Aorta (tissue), 5 donors: ENCODE measurements at regions of chr15 and their contacts with region 1.

Region 1: DNA sequence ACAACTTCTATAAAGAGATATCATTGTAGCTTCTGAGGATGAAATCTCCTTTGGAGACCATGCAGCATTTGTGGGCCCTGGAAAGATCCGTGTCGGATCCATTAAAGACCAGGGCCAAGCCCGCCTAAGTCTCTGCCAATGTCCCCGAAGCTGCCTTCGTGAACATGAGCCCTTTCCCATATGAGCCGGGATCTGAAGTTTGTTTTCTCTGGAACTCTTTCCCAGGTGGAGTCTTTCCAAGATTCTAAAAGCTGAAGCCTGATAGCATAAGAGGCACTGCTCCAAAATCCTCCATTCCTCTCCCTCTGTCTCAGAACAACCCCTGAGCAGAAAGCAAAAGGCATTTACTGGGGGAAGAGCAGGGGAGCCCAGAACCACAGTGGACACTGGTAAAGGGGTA is 274.6 kb downstream of the NTRK3 start:
- DNase-seq: peak in 1 of 2 donors; percentile 55
- ATAC-seq: peak; percentile 78
- H3K4me3 ChIP-seq: no peak overlapping the region
- H3K27ac ChIP-seq: peak overlapping the region; percentile 43 to 69
- H3K4me1 ChIP-seq: peaks cover 0 to 7% of the 10 kb centered on the region in 2 donors
- H3K27me3 ChIP-seq: no peaks in the 10 kb centered on the region

Region 2: DNA sequence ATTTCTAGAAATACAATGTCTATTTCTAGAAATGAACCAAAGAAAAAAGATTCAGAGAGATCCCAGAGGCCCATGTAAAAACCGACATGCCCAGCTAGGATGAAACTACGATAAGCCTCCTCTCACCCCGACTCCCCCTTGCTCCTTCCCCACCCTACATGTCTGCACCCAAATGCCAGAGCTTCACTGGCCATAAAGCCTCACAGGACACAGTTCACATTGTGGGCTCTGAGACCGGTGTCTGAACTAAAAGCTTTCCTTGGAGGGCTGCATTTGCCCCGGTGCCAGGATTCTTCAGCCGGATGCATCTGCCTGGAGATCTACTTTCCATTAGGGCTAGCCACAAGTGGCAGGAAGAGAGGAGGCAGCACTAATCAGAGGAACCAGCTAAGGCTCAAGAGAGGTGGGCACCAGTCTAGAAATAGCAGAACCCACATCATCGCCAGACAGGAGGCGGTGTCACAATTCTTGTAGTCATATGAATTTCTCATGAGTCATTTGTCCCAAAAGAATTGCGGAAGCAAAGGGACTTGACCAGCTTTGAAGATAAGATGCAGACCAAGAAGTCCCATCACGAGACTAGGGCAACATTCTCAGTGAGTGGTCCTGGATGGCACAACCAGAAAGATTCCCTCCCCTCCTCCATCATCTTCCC is 79.1 kb before region 1 on chr15:
- intact Hi-C with region 1: loop called in 1 of 2 experiments (anchors 5 kb)
- DNase-seq: peak; percentile 80 to 84
- ATAC-seq: peak; percentile 87
- H3K4me3 ChIP-seq: no peak overlapping the region
- H3K27ac ChIP-seq: peak overlapping the region; percentile 22 to 73
- H3K4me1 ChIP-seq: no peaks in the 10 kb centered on the region
- H3K27me3 ChIP-seq: no peaks in the 10 kb centered on the region

Region 3: DNA sequence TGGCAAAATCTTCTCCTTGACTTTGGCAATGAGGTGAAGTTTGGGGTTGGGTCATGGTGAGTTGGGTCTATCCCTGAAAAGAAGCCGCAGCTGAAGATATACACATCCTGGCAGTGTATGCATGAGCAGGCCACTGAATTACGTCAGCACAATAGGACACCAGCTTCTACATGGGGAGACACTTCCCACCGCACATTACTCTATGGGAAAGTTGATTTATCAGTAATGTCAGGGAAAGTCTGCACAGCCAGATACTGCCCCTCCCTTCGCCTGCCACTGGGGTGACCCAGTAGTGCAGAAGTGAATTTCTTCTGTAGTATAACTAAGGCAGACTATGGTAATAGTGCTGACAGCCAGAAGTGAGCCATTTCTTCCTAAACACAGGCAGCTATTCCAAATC is 29.6 kb after region 1 on chr15:
- intact Hi-C with region 1: loop called in 1 of 2 experiments (anchors 2 kb)
- DNase-seq: no peak
- ATAC-seq: no peak
- H3K4me3 ChIP-seq: no peak overlapping the region
- H3K27ac ChIP-seq: no peak overlapping the region
- H3K4me1 ChIP-seq: peaks cover 3 to 4% of the 10 kb centered on the region in 2 donors
- H3K27me3 ChIP-seq: no peaks in the 10 kb centered on the region